Common myeloid progenitor, CD34-positive (primary cell): ENCODE measurements at regions of chr21 and their contacts with region 1.

Region 1: DNA sequence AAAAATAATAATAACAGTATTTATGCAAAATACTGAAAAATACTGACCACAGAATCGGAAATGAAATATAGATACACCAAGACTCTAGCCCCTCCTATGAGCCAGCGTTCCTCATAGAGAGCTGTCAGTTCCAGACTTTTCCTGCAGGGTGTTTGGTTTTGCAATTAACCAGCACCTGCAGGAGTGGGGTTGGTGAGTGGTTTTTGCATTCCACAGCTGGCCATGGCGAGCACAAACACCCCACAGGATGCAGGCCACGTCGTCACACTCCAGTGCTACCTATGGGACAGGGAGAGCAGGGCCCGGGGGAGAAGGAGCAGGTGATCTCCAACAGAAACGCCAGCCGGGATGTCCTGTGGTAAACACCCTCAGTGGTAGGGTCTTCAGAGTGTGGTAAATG is 94.1 kb downstream of the ERG start:
- DNase-seq: peak; percentile 34 to 80 (median 78)
- H3K4me3 ChIP-seq: peak overlapping the region in 1 of 7 experiments; percentile 10
- H3K27ac ChIP-seq: peak overlapping the region in 1 of 2 experiments; percentile 25
- H3K4me1 ChIP-seq: peaks cover 16 to 68% (median 48%) of the 10 kb centered on the region in 4 experiments
- H3K27me3 ChIP-seq: no peaks in the 10 kb centered on the region

Region 2: GRCh38 chr21:38380481-38381137 is 23.6 kb before region 1 on chr21:
- CTCF ChIA-PET with region 1: interaction called, 25 read pairs
- POLR2A ChIA-PET with region 1: no interaction called
- DNase-seq: peak; percentile 42 to 69 (median 69)
- H3K4me3 ChIP-seq: no peak overlapping the region
- H3K27ac ChIP-seq: peak overlapping the region in 1 of 2 experiments; percentile 16
- H3K4me1 ChIP-seq: peaks cover 33 to 98% (median 85%) of the 10 kb centered on the region in 4 experiments
- H3K27me3 ChIP-seq: no peaks in the 10 kb centered on the region

Region 3: DNA sequence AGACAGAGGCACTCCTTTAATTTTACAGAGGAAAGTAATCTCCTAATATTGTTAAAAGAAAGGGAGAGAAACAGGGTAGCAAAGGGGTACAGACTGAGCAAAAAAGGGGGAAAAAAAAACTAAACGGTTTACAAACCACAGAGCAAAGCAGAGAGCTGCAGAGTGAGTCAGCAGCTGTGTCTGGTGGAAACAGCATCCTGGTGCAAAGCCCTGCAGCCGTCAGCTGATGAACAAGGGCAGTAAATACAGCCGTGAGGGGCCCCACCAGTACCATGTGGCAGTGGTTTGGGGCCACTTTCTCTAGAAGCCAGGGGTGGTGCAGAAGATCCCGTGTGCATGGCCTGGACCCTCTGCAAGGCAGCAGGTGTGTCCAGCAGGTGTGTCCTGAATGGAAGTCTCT is 17.2 kb before region 1 on chr21:
- CTCF ChIA-PET with region 1: interaction called, 15 read pairs
- POLR2A ChIA-PET with region 1: interaction called, 3 read pairs
- DNase-seq: peak; percentile 74 to 96 (median 93)
- H3K4me3 ChIP-seq: peak overlapping the region in 3 of 7 experiments; percentile 30 to 43 (median 37)
- H3K27ac ChIP-seq: peak overlapping the region; percentile 71 to 78
- H3K4me1 ChIP-seq: peaks cover 25 to 85% (median 74%) of the 10 kb centered on the region in 4 experiments
- H3K27me3 ChIP-seq: no peaks in the 10 kb centered on the region

Region 4: DNA sequence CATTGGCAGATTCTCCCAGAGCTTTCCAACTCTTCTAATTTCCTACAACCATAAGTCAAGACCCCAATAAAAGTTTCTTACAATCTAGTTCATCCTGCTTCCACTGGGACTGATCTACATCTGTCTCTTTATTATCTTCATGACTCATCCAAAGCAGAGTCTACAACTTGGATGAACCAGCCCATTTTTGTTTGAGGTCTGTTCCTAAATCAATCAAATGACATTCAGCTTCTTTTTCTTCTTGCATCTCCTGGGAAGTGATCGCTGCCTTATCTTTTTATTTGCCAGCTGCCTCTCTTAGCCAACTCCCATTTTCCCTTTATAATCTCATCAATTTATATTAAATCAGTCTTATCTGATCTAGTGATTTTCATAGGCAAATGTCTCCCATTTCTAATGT is 11.5 kb before region 1 on chr21:
- CTCF ChIA-PET with region 1: interaction called, 15 read pairs
- POLR2A ChIA-PET with region 1: interaction called, 3 read pairs
- DNase-seq: no peak
- H3K4me3 ChIP-seq: no peak overlapping the region
- H3K27ac ChIP-seq: no peak overlapping the region
- H3K4me1 ChIP-seq: peaks cover 2 to 28% (median 20%) of the 10 kb centered on the region in 4 experiments
- H3K27me3 ChIP-seq: no peaks in the 10 kb centered on the region

Region 5: GRCh38 chr21:38434913-38435533 is 30.9 kb after region 1 on chr21:
- CTCF ChIA-PET with region 1: no interaction called
- POLR2A ChIA-PET with region 1: no interaction called
- DNase-seq: no peak
- H3K4me3 ChIP-seq: no peak overlapping the region
- H3K27ac ChIP-seq: no peak overlapping the region
- H3K4me1 ChIP-seq: peaks cover 0 to 24% (median 24%) of the 10 kb centered on the region in 4 experiments
- H3K27me3 ChIP-seq: no peaks in the 10 kb centered on the region